Activated T-helper 2 cell treated with anti-CD3 and anti-CD28 coated beads, Interferon-gamma antibody, Interleukin-2, Interleukin-4, amounts not matched to agents 10 μg/mL and 5 μg/mL and 100 μg/mL, durations not matched to agents 14 hours and 24 hours and 36 hours (primary cell): ENCODE measurements at regions of chr14 and their contacts with region 1.

Region 1: GRCh38 chr14:22852940-22853767 is 16.8 kb downstream of the MMP14 start:
- DNase-seq: peak; percentile 80
- H3K4me3 Mint-ChIP-seq: peak overlapping the region; percentile 79
- H3K27ac Mint-ChIP-seq: peak overlapping the region; percentile 40
- H3K4me1 Mint-ChIP-seq: peaks cover 24% of the 10 kb centered on the region
- H3K27me3 Mint-ChIP-seq: peaks cover 9% of the 10 kb centered on the region

Region 2: DNA sequence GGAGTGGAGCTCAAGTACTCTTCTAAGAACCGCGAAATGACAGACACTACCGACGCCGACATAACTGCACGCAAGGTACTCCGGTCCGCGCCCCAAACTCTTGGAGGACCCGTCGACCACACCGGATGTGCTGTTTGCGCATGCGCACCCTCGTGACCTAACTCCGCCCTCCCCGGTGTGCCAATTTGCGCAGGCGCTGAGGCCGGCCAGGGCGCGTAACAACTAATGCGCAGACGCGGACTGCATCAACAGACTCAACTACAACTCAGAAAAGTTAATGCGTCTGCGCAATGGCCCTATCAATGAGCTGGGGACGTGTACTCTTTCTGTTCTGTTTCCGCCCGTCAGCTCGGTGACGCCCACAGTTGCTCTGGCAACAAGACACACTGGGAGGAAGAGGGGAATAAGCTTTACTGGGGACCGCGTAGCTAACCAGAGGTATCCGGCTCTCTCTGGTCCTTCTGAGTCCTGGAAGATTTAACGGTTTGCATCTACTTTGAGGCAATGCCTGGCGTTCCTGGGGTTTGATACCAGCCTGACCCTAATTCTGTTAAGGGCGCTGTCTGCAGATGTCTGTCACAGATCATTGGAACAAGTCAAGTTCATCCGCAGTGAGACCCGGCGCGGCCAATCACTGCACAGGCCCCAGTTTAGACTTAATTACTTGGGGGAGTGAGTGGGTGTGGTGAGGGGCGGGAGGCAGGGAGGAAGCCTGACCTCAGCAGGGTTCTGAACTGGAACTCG is 263.9 kb before region 1 on chr14 and contains the start of gene DAD1:
- intact Hi-C with region 1: loop called (anchors 5 kb)
- DNase-seq: peak; percentile 100
- H3K4me3 Mint-ChIP-seq: peak within 1 kb of the TSS; percentile 88
- H3K27ac Mint-ChIP-seq: peak within 1 kb of the TSS; percentile 95
- H3K4me1 Mint-ChIP-seq: peaks cover 51% of the 10 kb centered on the region
- H3K27me3 Mint-ChIP-seq: peaks cover 10% of the 10 kb centered on the region
- total RNA-seq, gene DAD1: 246 and 256 TPM in 2 replicates

Region 3: DNA sequence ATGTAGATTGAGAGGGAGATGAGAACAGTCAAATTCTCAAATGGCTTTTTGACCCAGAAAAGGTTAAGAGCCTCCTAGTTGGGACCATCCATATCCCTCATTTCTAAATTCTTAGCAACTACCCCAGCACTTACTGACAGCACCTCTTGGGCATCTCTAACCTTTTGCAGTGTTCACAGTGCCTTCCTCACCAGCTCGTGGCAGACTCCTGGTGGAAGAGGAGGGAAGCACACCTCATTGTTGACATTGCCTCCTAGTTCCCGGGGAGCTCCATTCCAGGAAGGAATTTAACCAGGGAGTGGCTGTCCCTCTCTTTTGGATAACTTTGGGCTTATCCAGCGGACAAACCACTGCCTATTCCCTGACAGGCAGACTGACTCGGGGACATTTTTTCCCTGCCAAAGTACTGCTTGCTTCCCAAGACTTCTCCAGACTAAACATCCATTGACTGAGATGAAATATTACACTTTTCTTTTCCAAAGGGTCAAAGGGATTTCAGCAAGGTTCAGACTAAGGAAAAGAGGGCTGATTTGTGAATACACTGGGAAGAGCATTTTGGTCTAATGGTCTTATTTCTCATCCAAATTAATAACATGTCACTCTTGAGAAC is 200.0 kb before region 1 on chr14:
- intact Hi-C with region 1: loop called (anchors 2 kb)
- DNase-seq: peak; percentile 40
- H3K4me3 Mint-ChIP-seq: no peak overlapping the region
- H3K27ac Mint-ChIP-seq: no peak overlapping the region
- H3K4me1 Mint-ChIP-seq: peaks cover 2% of the 10 kb centered on the region
- H3K27me3 Mint-ChIP-seq: no peaks in the 10 kb centered on the region

Region 4: GRCh38 chr14:22822571-22823098 is 30.5 kb before region 1 on chr14:
- intact Hi-C with region 1: loop called (anchors 1 kb)
- DNase-seq: peak; percentile 47
- H3K4me3 Mint-ChIP-seq: peak overlapping the region; percentile 62
- H3K27ac Mint-ChIP-seq: no peak overlapping the region
- H3K4me1 Mint-ChIP-seq: peaks cover 24% of the 10 kb centered on the region
- H3K27me3 Mint-ChIP-seq: peaks cover 19% of the 10 kb centered on the region

Region 5: GRCh38 chr14:22939684-22940083 is 86.5 kb after region 1 on chr14:
- intact Hi-C with region 1: no loop called
- DNase-seq: no peak
- H3K4me3 Mint-ChIP-seq: no peak overlapping the region
- H3K27ac Mint-ChIP-seq: no peak overlapping the region
- H3K4me1 Mint-ChIP-seq: no peaks in the 10 kb centered on the region
- H3K27me3 Mint-ChIP-seq: no peaks in the 10 kb centered on the region